ENCODE measurements at regions of chr15 and their contacts with region 1.

Region 1: GRCh38 chr15:96218623-96219455 is 111.7 kb upstream of the NR2F2 start:
- DNase-seq: no peak
- H3K4me3 ChIP-seq: no peak overlapping the region
- H3K27ac ChIP-seq: no peak overlapping the region
- H3K4me1 ChIP-seq: no peaks in the 10 kb centered on the region
- H3K27me3 ChIP-seq: no peaks in the 10 kb centered on the region
- CTCF ChIP-seq: no peak
- POLR2A ChIP-seq: no peak

Region 2: GRCh38 chr15:96053031-96053780 is 165.6 kb before region 1 on chr15:
- CTCF ChIA-PET with region 1: no interaction called
- POLR2A ChIA-PET with region 1: no interaction called
- dilution Hi-C with region 1: no loop called
- intact Hi-C with region 1: no loop called
- DNase-seq: peak; percentile 47
- H3K4me3 ChIP-seq: peak overlapping the region; percentile 1 to 9 (median 4)
- H3K27ac ChIP-seq: no peak overlapping the region
- H3K4me1 ChIP-seq: peaks cover 2% of the 10 kb centered on the region
- H3K27me3 ChIP-seq: peaks cover 0 to 1% of the 10 kb centered on the region in 2 experiments
- CTCF ChIP-seq: no peak
- POLR2A ChIP-seq: no peak

Region 3: GRCh38 chr15:96183514-96183850 is 35.4 kb before region 1 on chr15:
- CTCF ChIA-PET with region 1: no interaction called
- POLR2A ChIA-PET with region 1: no interaction called
- dilution Hi-C with region 1: no loop called
- intact Hi-C with region 1: loop called (anchors 1 kb)
- DNase-seq: no peak
- H3K4me3 ChIP-seq: no peak overlapping the region
- H3K27ac ChIP-seq: no peak overlapping the region
- H3K4me1 ChIP-seq: no peaks in the 10 kb centered on the region
- H3K27me3 ChIP-seq: no peaks in the 10 kb centered on the region
- CTCF ChIP-seq: no peak
- POLR2A ChIP-seq: no peak

Region 4: GRCh38 chr15:96234109-96234892 is 15.5 kb after region 1 on chr15:
- CTCF ChIA-PET with region 1: no interaction called
- POLR2A ChIA-PET with region 1: no interaction called
- dilution Hi-C with region 1: no loop called
- intact Hi-C with region 1: no loop called
- DNase-seq: no peak
- H3K4me3 ChIP-seq: no peak overlapping the region
- H3K27ac ChIP-seq: no peak overlapping the region
- H3K4me1 ChIP-seq: peaks cover 15% of the 10 kb centered on the region
- H3K27me3 ChIP-seq: no peaks in the 10 kb centered on the region
- CTCF ChIP-seq: no peak
- POLR2A ChIP-seq: no peak